Activated CD8-positive, alpha-beta memory T cell treated with anti-CD3 and anti-CD28 coated beads, Interleukin-2, amount 10 ng/mL, durations not matched to agents 7 days and 5 days (primary cell): ENCODE measurements at regions of chr19 and their contacts with region 1.

Region 1: GRCh38 chr19:55385740-55386529 is at the start of gene RPL28:
- DNase-seq: peak; percentile 99
- ATAC-seq: peak; percentile 72
- H3K4me3 Mint-ChIP-seq: peak within 1 kb of the TSS; percentile 96
- H3K27ac Mint-ChIP-seq: peak within 1 kb of the TSS; percentile 96
- H3K4me1 Mint-ChIP-seq: peaks cover 61% of the 10 kb centered on the region
- H3K27me3 Mint-ChIP-seq: no peaks in the 10 kb centered on the region
- total RNA-seq, gene RPL28: 2,244 to 2,759 TPM

Region 2: DNA sequence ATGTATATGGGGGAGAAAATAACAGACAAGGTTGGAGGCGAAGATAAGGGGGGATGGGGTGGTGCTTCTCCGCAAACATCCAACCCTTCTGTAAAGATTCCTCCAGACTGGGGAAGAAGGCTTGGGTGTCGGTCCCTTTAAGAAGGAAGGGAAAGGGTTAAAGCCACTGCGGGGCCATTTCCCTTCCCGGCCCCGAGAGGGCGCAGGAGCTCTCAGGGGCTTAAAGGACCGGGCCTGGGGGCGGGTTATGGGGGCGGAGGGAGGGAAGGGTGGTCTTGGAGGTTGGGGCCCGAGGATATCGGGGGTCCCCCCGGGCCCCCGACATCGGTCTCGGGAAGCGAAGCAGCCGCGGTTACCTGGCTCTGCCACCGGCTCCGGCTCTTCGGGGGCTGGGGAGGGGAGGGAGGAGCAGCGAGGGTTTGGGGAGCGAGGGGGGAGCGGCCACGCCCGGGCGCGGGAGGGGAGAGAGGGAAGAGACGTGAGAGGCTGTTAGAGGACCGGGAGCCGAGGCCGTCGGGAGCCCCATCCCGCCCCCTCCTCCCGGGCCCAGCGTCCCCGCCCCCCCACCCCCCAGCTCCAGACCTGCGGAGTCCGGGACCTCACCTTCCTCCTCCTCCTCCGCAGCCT is 239.7 kb before region 1 on chr19:
- CTCF ChIA-PET with region 1: interaction called, 14 read pairs
- DNase-seq: peak; percentile 56
- ATAC-seq: peak; percentile 51
- H3K4me3 Mint-ChIP-seq: no peak overlapping the region
- H3K27ac Mint-ChIP-seq: no peak overlapping the region
- H3K4me1 Mint-ChIP-seq: peaks cover 6% of the 10 kb centered on the region
- H3K27me3 Mint-ChIP-seq: peaks cover 56% of the 10 kb centered on the region

Region 3: DNA sequence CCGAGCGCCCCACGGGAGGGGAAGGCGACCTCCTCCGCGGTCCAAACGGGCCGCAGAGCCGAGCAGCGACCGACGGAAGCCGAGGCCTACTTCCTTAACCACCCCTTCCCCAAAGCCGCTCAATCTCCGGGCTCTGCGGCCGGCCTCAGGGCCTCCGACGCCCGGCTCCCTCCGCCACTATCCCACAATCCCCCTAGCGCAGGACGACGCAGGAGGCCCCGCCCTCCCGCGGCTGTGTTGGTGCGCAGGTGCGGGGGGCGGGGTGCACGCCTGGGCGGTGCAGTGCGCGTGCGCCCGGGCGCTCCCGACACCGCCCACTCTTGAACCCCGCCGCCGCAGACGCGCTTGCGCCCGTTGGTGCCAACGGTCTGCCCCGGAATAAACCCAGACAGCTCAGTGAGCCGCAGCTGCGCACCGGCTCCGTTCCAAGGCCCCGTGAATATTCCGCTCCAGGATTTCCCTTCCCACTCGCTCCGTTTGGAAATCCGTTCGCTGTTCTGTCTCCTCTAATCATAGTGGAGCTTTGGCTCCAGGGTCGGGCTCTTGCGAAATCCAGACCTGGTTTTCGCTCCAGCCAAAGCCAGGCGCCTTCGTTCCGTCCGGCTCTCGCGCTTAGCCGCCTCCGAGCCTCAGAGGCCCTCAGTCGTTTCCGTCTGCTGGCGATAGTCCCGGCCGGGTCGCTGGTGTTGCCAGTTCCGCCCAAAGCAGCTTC is 127.0 kb before region 1 on chr19 and contains the start of gene PPP6R1:
- CTCF ChIA-PET with region 1: interaction called, 30 read pairs
- DNase-seq: peak; percentile 96
- ATAC-seq: peak; percentile 81
- H3K4me3 Mint-ChIP-seq: peak within 1 kb of the TSS; percentile 99
- H3K27ac Mint-ChIP-seq: peak within 1 kb of the TSS; percentile 100
- H3K4me1 Mint-ChIP-seq: peaks cover 27% of the 10 kb centered on the region
- H3K27me3 Mint-ChIP-seq: no peaks in the 10 kb centered on the region
- total RNA-seq, gene PPP6R1: 263 to 291 TPM

Region 4: DNA sequence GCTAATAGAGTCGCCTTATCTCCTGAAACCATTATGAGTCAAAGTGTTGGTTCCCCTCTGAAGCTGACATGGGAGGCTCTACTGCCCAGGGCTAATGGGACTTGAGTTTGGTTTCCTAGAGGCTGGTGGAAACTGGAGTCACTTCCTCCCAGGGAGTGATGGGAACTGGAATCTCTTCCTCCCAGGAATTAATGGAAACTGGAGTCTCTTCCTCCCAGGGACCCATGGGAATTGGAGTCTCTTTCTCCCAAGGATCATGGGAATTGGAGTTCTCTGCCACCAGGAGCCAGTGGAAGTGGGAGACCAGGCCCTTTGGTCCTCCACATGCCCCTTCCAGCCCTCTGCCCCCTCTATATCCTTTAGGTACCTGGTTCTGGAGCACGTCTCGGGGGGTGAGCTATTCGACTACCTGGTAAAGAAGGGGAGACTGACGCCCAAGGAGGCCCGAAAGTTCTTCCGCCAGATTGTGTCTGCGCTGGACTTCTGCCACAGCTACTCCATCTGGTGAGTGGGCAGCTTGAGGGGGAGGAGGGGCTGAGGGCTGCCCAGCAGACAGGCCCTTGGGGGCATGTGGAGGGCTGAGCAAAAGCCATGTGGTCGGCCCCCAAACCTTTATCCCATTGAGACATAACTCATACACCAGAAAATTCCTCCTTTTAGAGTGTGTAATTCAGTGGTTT is 96.7 kb before region 1 on chr19:
- CTCF ChIA-PET with region 1: interaction called, 26 read pairs
- DNase-seq: no peak
- ATAC-seq: no peak
- H3K4me3 Mint-ChIP-seq: no peak overlapping the region
- H3K27ac Mint-ChIP-seq: no peak overlapping the region
- H3K4me1 Mint-ChIP-seq: peaks cover 8% of the 10 kb centered on the region
- H3K27me3 Mint-ChIP-seq: no peaks in the 10 kb centered on the region

Region 5: GRCh38 chr19:55339048-55339888 is 46.7 kb before region 1 on chr19 and contains the start of gene KMT5C:
- CTCF ChIA-PET with region 1: interaction called, 21 read pairs
- DNase-seq: peak; percentile 100
- ATAC-seq: peak; percentile 87
- H3K4me3 Mint-ChIP-seq: peak within 1 kb of the TSS; percentile 73
- H3K27ac Mint-ChIP-seq: peak within 1 kb of the TSS; percentile 90
- H3K4me1 Mint-ChIP-seq: peaks cover 17% of the 10 kb centered on the region
- H3K27me3 Mint-ChIP-seq: peaks cover 14% of the 10 kb centered on the region
- total RNA-seq, gene KMT5C: 26.4 to 35.3 TPM